ENCODE measurements at regions of chr6 and their contacts with region 1.

Region 1: GRCh38 chr6:27472617-27473400 is at the start of gene ZNF184:
- DNase-seq: peak; percentile 97
- H3K4me3 ChIP-seq: peak within 1 kb of the TSS; percentile 88
- H3K27ac ChIP-seq: peak within 1 kb of the TSS; percentile 88
- H3K4me1 ChIP-seq: peaks cover 32% of the 10 kb centered on the region
- CTCF ChIP-seq: peak; percentile 44
- total RNA-seq, gene ZNF184: 18.6 and 20.6 TPM in 2 replicates

Region 2: GRCh38 chr6:26020329-26021000 is 1452.3 kb before region 1 on chr6:
- CTCF ChIA-PET with region 1: no interaction called
- POLR2A ChIA-PET with region 1: no interaction called
- intact Hi-C with region 1: loop called (anchors 10 kb)
- DNase-seq: peak; percentile 93
- H3K4me3 ChIP-seq: peak overlapping the region; percentile 75
- H3K27ac ChIP-seq: peak overlapping the region; percentile 99
- H3K4me1 ChIP-seq: peaks cover 56% of the 10 kb centered on the region
- CTCF ChIP-seq: no peak

Region 3: GRCh38 chr6:26327450-26328264 is 1145.2 kb before region 1 on chr6:
- CTCF ChIA-PET with region 1: no interaction called
- POLR2A ChIA-PET with region 1: no interaction called
- intact Hi-C with region 1: loop called (anchors 10 kb)
- DNase-seq: peak; percentile 68
- H3K4me3 ChIP-seq: peak overlapping the region; percentile 66
- H3K27ac ChIP-seq: no peak overlapping the region
- H3K4me1 ChIP-seq: peaks cover 44% of the 10 kb centered on the region
- CTCF ChIP-seq: no peak

Region 4: DNA sequence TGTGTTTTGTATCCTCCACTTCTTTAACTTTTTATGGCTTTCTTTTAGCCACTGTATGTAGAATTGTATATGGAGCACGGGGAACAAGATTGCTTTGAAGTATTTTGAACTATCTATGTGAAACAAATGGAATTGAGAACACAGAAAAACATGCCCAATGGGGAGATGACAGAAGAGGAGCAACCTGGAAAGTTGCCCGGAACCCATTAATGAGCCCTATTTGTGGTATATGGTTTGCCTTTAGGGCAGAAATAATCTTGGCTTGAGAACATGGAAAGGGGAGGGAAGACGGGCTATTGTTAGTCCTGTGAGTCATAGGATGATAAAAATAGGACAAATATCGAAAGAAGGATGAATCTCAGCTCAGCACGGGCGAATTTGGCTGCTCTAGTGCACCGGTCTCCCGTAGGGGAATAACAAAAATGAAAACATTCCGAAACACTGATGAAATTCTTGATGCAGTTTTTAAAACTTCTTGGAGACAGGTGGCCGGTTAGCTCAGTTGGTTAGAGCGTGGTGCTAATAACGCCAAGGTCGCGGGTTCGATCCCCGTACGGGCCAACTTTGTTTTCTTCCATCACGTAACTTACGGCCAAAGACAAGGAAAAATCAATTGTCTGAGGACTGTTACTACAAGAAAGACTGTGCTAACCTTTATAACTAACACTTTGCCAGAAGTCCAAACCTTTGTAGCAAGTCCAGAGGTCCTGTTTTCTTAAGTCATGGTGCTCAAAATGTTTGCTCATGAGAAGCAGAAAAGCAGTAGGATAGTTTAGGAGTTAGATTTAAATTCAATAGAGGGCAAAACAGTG is 919.0 kb before region 1 on chr6:
- CTCF ChIA-PET with region 1: no interaction called
- POLR2A ChIA-PET with region 1: no interaction called
- intact Hi-C with region 1: loop called (anchors 10 kb)
- DNase-seq: peak; percentile 84
- H3K4me3 ChIP-seq: peak overlapping the region; percentile 80
- H3K27ac ChIP-seq: peak overlapping the region; percentile 91
- H3K4me1 ChIP-seq: peaks cover 62% of the 10 kb centered on the region
- CTCF ChIP-seq: no peak

Region 5: DNA sequence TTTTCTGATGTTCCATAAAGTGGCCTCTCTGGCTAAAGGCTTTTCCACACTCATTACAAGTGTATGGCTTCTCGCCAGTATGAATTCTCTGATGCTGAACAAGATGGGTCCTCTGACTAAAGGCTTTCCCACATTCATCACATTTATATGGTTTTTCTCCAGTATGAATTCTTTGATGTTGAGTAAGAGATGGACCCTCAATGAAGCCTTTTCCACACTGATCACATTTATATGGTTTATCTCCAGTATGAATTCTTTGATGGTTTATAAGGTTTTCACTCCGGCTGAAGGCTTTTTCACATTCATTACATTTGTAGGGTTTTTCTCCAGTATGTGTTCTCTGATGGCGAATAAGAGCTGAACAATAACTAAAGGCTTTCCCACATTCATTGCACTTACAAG is 20.3 kb before region 1 on chr6:
- CTCF ChIA-PET with region 1: no interaction called
- POLR2A ChIA-PET with region 1: no interaction called
- intact Hi-C with region 1: loop called (anchors 2 kb)
- DNase-seq: peak; percentile 26
- H3K4me3 ChIP-seq: no peak overlapping the region
- H3K27ac ChIP-seq: no peak overlapping the region
- H3K4me1 ChIP-seq: no peaks in the 10 kb centered on the region
- CTCF ChIP-seq: no peak

Region 6: GRCh38 chr6:28080631-28081485 is 608.0 kb after region 1 on chr6:
- CTCF ChIA-PET with region 1: no interaction called
- POLR2A ChIA-PET with region 1: no interaction called
- intact Hi-C with region 1: loop called (anchors 10 kb)
- DNase-seq: peak; percentile 95
- H3K4me3 ChIP-seq: peak overlapping the region; percentile 87
- H3K27ac ChIP-seq: peak overlapping the region; percentile 70
- H3K4me1 ChIP-seq: peaks cover 12% of the 10 kb centered on the region
- CTCF ChIP-seq: no peak

Region 7: GRCh38 chr6:28657769-28658465 is 1185.1 kb after region 1 on chr6:
- CTCF ChIA-PET with region 1: no interaction called
- POLR2A ChIA-PET with region 1: no interaction called
- intact Hi-C with region 1: loop called (anchors 10 kb)
- DNase-seq: peak; percentile 78
- H3K4me3 ChIP-seq: peak overlapping the region; percentile 82
- H3K27ac ChIP-seq: peak overlapping the region; percentile 16
- H3K4me1 ChIP-seq: peaks cover 18% of the 10 kb centered on the region
- CTCF ChIP-seq: no peak